GM18951 (cell line): ENCODE measurements at regions of chr11 and their contacts with region 1.

Region 1: GRCh38 chr11:3854977-3855807 is at the start of gene STIM1:
- POLR2A ChIP-seq: peak; percentile 61

Region 2: DNA sequence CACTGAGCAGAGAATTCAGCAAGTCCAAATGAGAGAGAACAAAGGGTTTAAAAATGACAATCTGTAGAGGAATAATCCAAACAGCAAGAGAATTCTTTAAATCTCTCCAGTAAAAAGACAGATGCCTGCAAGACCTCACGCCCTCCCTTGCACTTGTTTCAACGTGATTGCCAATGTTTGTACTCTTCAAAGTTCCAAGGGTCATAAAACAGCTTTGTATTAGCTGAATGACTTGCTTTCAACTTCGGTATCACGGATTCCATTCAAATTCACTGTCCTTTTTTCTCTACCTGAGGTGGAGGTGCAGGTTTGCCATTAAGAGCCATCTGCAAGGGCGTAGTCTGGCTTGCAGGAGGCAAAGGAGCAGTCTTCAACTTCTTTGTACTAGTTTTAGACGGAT is 142.9 kb before region 1 on chr11:
- in situ Hi-C with region 1: no loop called
- POLR2A ChIP-seq: no peak

Region 3: GRCh38 chr11:4065601-4066377 is 210.6 kb after region 1 on chr11:
- in situ Hi-C with region 1: loop called (anchors 5 kb)
- POLR2A ChIP-seq: no peak